ENCODE measurements at regions of chr7 and their contacts with region 1.

Region 1: GRCh38 chr7:103074519-103075336 is at the starts of genes ARMC10 and FBXL13:
- DNase-seq: peak; percentile 91 to 93 (median 93)
- H3K4me3 ChIP-seq: peak within 1 kb of the TSS; percentile 71 to 89 (median 81)
- H3K4me3 Mint-ChIP-seq: peak within 1 kb of the TSS; percentile 93 to 98
- H3K27ac ChIP-seq: peak within 1 kb of the TSS; percentile 37 to 76
- H3K27ac Mint-ChIP-seq: peak within 1 kb of the TSS; percentile 79 to 97 (median 96)
- H3K4me1 ChIP-seq: peaks cover 34 to 45% of the 10 kb centered on the region in 2 donors
- H3K4me1 Mint-ChIP-seq: peaks cover 41% of the 10 kb centered on the region
- H3K27me3 ChIP-seq: no peaks in the 10 kb centered on the region
- H3K27me3 Mint-ChIP-seq: no peaks in the 10 kb centered on the region
- CTCF ChIP-seq: peak; percentile 66
- polyA plus RNA-seq, gene ARMC10: 15.4 to 60.1 (median 55.1) TPM
- polyA plus RNA-seq, gene FBXL13: 0.05 TPM in 1 of 3 donors, not detected in the others

Region 2: DNA sequence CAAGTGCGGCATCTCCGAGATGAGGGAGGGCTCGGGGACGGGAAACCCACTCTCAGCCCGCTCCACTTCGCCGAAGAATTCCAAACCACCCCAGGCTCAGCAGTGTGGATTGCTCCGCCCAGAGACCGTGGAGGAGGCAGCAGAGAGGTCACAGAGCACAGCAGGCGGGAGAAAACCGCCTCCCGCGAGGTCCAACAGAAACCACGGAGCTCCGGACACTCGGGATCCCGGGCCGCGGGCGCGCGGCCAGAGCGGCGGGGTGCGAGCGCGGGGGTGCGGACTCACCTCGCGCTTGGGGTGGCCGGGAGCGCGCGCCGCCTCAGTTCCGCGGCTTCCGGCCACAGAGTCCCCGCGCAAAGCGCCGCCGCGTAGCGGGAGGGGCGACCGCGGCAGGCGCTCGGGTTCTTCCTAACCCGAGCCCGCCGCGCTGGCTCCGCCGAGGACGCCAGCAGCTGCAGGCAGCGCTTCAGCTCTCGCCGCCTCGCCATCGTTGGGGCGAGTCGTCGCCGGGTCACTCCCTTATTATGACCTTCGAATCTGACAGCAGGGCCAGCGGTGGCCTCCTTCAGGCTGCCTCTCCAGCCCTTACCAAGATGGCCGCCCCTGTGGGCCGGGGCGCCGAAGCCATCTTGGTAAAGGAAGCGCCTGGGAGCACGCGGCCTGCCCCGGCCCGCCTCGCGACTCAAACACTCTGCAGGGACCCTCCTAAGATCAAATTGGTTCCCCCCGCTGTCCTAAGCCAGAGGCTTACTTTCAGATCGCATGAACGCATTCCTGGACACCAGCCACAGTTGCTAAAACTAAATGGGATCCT is 74.5 kb after region 1 on chr7 and contains the start of gene NAPEPLD:
- intact Hi-C with region 1: loop called in 1 of 2 experiments (anchors 5 kb)
- DNase-seq: peak; percentile 65 to 72 (median 67)
- H3K4me3 ChIP-seq: peak within 1 kb of the TSS; percentile 86 to 93 (median 90)
- H3K4me3 Mint-ChIP-seq: peak within 1 kb of the TSS; percentile 98 to 100
- H3K27ac ChIP-seq: peak within 1 kb of the TSS; percentile 75 to 86
- H3K27ac Mint-ChIP-seq: peak within 1 kb of the TSS; percentile 91 to 98 (median 92)
- H3K4me1 ChIP-seq: peaks cover 13 to 21% of the 10 kb centered on the region in 2 donors
- H3K4me1 Mint-ChIP-seq: peaks cover 33% of the 10 kb centered on the region
- H3K27me3 ChIP-seq: no peaks in the 10 kb centered on the region
- H3K27me3 Mint-ChIP-seq: peaks cover 2 to 5% (median 3%) of the 10 kb centered on the region in 3 donors
- CTCF ChIP-seq: no peak
- polyA plus RNA-seq, gene NAPEPLD: 1.1 to 2.2 (median 1.6) TPM